Cardiac septum (tissue), 1 donor: ENCODE measurements at regions of chr6 and their contacts with region 1.

Region 1: GRCh38 chr6:143510991-143511891 is at the start of gene FUCA2:
- DNase-seq: peak; percentile 96
- total RNA-seq, gene FUCA2: 37.8 TPM

Region 2: GRCh38 chr6:143450453-143451371 is 60.5 kb before region 1 on chr6 and contains the starts of genes ADAT2 and PEX3:
- intact Hi-C with region 1: loop called (anchors 5 kb)
- DNase-seq: peak; percentile 95
- total RNA-seq, gene ADAT2: 2.2 TPM
- total RNA-seq, gene PEX3: 23.1 TPM

Region 3: GRCh38 chr6:143536865-143537691 is 25.8 kb after region 1 on chr6:
- intact Hi-C with region 1: loop called (anchors 2 kb)
- DNase-seq: peak; percentile 85

Region 4: GRCh38 chr6:143564484-143565017 is 53.3 kb after region 1 on chr6:
- intact Hi-C with region 1: loop called (anchors 5 kb)
- DNase-seq: no peak